PC-9 (cell line): ENCODE measurements at regions of chr5 and their contacts with region 1.

Region 1: GRCh38 chr5:83321483-83322055 is 150.0 kb upstream of the VCAN start:
- DNase-seq: no peak
- H3K4me3 ChIP-seq: no peak overlapping the region
- H3K27ac ChIP-seq: no peak overlapping the region
- H3K4me1 ChIP-seq: no peaks in the 10 kb centered on the region
- H3K27me3 ChIP-seq: no peaks in the 10 kb centered on the region
- CTCF ChIP-seq: no peak

Region 2: DNA sequence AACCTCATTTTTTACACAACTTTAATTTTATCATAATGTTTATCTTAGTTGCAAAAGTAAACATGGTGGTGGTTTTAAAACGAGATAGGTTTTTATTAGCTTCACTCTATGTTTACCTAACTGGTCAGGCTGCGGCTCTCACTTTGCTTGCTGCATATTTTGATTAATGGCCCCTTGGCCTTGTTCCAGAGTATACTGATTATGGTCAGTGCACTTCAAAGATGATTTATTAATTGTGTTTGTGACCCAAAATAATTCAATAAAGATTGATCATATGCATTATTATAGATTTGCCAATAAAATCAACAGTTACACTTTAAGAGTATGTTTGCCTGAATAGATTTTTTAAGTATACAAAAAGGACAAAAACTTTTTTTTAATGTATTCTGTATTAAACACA is 56.3 kb before region 1 on chr5:
- CTCF ChIA-PET with region 1: no interaction called
- POLR2A ChIA-PET with region 1: no interaction called
- intact Hi-C with region 1: loop called (anchors 2 kb)
- DNase-seq: peak; percentile 12 to 84
- H3K4me3 ChIP-seq: no peak overlapping the region
- H3K27ac ChIP-seq: no peak overlapping the region
- H3K4me1 ChIP-seq: peaks cover 7% of the 10 kb centered on the region; the same call in 1 of the 2 replicates
- H3K27me3 ChIP-seq: peaks cover 31% of the 10 kb centered on the region
- CTCF ChIP-seq: no peak